Gastrocnemius medialis (tissue), 4 donors: ENCODE measurements at regions of chr9 and their contacts with region 1.

Region 1: DNA sequence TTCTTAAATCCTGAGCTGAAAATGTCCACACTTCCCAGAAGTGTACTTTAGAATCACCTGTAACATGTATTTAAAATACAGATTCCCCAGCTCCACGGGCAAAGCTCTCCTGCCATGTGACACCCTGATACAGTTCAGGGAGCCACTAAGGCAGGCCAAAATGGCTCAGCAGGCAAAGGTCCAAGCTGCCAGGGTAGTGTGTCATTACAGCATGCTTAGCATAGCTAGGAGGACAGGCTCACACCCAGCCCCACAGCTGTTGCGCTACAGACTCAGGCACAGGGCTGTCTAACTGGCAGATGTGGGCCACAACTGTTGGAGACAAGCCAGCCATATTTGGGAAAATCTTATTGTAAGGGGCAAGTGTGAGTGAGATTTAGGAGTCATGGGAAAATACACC is 73.0 kb downstream of the C9orf85 start:
- DNase-seq: peak; percentile 89 to 91
- ATAC-seq: peak; percentile 94 to 100
- H3K4me3 ChIP-seq: no peak overlapping the region
- H3K27ac ChIP-seq: peak overlapping the region in 3 of 4 donors; percentile 16 to 42 (median 37)
- H3K4me1 ChIP-seq: peaks cover 23 to 27% of the 10 kb centered on the region in 2 donors
- H3K27me3 ChIP-seq: no peaks in the 10 kb centered on the region
- CTCF ChIP-seq: no peak
- POLR2A ChIP-seq: no peak

Region 2: DNA sequence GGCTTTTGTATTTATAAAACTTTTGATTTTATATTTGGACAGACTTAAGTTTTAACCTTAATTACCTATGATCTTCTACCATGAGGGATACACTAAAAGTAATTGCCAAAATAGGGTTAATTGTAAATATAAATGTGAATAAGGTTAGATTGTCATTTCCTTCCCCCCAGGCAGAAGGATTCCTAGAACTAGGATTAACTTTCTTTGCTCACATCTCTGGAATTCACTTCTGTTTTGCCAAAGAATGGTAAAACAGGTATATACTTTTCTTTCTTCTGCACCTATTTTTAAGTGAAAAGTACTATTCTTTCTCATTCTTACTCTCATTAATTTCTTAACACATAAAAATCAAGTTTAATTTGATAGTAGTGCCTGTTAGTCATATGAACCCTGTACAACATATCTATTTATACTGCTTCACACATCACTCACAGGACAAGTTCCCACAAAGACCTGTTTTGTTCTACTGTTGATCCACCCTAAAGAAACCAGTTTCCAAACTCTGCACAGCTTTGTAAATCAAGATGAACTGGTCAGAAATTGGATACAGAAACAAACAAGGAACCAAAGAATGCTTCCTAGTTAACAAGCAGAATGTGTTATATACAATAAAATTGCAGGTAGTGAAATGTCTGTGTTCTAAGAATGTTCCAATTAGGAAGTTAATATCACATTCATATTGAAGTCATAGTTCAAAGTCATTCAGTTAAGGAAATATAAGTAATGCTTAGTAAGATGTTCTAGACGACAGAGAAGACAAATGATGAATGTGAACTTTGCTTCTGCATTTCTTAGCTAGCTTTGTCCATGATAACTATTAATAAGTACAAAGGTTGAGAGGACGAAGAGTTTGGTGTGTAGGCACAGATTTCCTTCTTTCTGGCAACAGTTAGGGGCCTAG is 39.7 kb before region 1 on chr9:
- in situ Hi-C with region 1: no loop called
- intact Hi-C with region 1: loop called (anchors 5 kb)
- DNase-seq: no peak
- ATAC-seq: peak; percentile 53 to 81
- H3K4me3 ChIP-seq: no peak overlapping the region
- H3K27ac ChIP-seq: peak overlapping the region in 2 of 4 donors; percentile 45 to 52
- H3K4me1 ChIP-seq: peaks cover 11 to 39% of the 10 kb centered on the region in 2 donors
- H3K27me3 ChIP-seq: no peaks in the 10 kb centered on the region
- CTCF ChIP-seq: no peak
- POLR2A ChIP-seq: no peak